Activated B cell treated with CpG ODN at 0.5 μM for 24 hours (primary cell): ENCODE measurements at regions of chr7 and their contacts with region 1.

Region 1: DNA sequence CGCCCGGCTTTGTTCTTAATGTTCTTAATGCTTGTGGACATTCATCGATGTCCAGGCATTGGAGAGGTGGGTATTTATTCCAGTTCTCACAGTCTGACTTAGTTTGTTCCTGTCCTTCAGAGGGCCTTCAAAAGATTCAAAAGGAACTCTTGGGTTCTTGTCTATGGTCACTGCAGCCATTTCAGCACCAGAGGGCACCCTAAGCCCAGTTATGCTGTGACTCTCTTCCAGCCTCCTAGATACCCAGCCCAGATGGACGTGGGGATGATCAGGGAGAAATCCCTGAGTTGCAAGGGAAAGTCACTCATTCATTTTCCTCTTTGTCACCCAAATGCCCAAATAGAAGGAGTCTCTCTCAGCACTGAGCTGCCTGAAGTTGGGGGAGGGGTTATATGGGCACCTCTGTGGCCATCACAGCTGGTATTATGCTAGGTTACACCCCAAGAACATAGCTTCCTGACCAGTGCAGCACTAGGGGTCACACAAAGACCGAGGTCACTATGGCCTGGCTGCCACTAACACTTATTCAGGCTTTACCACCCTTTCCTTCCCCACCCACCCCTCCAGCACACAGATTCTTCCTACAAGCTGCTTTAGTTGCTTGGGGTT is 26.5 kb upstream of the CCDC126 start:
- DNase-seq: peak; percentile 53
- ATAC-seq: peak; percentile 89
- H3K4me3 Mint-ChIP-seq: no peak overlapping the region
- H3K27ac Mint-ChIP-seq: no peak overlapping the region
- H3K4me1 Mint-ChIP-seq: no peaks in the 10 kb centered on the region
- H3K27me3 Mint-ChIP-seq: peaks cover 14% of the 10 kb centered on the region
- CTCF ChIP-seq: peak; percentile 29

Region 2: DNA sequence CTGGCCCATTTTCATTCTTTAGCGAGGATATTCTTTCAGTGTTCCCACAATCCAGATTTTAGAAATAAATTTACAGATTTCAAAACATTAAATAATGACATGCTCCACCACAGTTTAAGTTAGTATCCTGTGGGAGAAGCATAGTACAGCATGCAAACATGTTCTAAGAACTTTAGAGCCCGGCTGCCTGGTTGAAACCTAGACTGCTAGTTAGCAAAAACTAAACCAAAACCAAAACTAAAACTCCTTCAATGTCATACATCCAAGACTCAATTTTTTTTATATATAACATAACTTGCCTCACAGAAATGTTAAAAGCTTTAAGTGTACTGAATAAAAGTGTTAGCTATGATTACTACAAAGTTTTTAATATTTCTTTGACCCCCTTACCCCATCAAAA is 55.9 kb before region 1 on chr7:
- CTCF ChIA-PET with region 1: no interaction called
- POLR2A ChIA-PET with region 1: no interaction called
- intact Hi-C with region 1: no loop called
- DNase-seq: no peak
- ATAC-seq: no peak
- H3K4me3 Mint-ChIP-seq: no peak overlapping the region
- H3K27ac Mint-ChIP-seq: no peak overlapping the region
- H3K4me1 Mint-ChIP-seq: no peaks in the 10 kb centered on the region
- H3K27me3 Mint-ChIP-seq: no peaks in the 10 kb centered on the region
- CTCF ChIP-seq: no peak

Region 3: DNA sequence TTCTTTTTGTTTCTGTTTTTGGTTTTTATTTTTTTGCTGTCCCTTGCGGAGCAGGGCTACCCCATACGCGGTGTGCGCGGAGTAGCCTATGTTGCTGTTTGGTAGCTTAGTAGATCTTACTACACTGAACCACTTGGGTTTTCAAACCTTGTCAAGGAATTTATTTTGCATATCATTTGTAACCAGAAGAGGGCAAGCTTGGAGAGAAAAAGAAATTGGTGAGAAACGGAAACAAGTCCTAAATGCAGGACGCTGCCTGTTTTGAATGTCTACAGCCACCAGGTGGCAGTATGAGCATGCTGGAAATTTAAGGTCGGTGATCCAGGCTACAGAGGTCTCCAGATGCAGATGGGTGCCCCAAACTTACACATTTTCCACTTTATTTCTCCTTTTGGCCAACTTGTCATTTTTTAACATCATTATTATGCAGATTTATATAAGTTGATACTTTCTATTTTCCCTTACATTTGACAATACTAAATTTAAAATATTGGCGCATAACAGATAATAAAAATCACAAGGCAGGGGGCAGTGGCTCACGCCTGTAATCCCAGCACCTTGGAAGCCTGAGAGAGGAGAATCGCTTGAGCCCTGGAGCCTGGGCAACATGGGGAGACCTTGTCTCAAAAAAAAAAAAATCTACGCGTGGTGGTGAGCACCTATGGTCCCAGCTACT is 23.7 kb before region 1 on chr7:
- CTCF ChIA-PET with region 1: interaction called, 3 read pairs
- POLR2A ChIA-PET with region 1: no interaction called
- intact Hi-C with region 1: loop called (anchors 1 kb)
- DNase-seq: peak; percentile 40
- ATAC-seq: peak; percentile 91
- H3K4me3 Mint-ChIP-seq: no peak overlapping the region
- H3K27ac Mint-ChIP-seq: no peak overlapping the region
- H3K4me1 Mint-ChIP-seq: peaks cover 18% of the 10 kb centered on the region
- H3K27me3 Mint-ChIP-seq: no peaks in the 10 kb centered on the region
- CTCF ChIP-seq: no peak

Region 4: GRCh38 chr7:23712368-23713284 is 141.9 kb after region 1 on chr7:
- CTCF ChIA-PET with region 1: interaction called, 42 read pairs
- POLR2A ChIA-PET with region 1: no interaction called
- intact Hi-C with region 1: loop called (anchors 1 kb)
- DNase-seq: no peak
- ATAC-seq: no peak
- H3K4me3 Mint-ChIP-seq: no peak overlapping the region
- H3K27ac Mint-ChIP-seq: no peak overlapping the region
- H3K4me1 Mint-ChIP-seq: no peaks in the 10 kb centered on the region
- H3K27me3 Mint-ChIP-seq: no peaks in the 10 kb centered on the region
- CTCF ChIP-seq: no peak

Region 5: GRCh38 chr7:24401628-24402593 is 831.2 kb after region 1 on chr7:
- CTCF ChIA-PET with region 1: no interaction called
- POLR2A ChIA-PET with region 1: no interaction called
- intact Hi-C with region 1: loop called (anchors 10 kb)
- DNase-seq: no peak
- ATAC-seq: no peak
- H3K4me3 Mint-ChIP-seq: no peak overlapping the region
- H3K27ac Mint-ChIP-seq: no peak overlapping the region
- H3K4me1 Mint-ChIP-seq: peaks cover 6% of the 10 kb centered on the region
- H3K27me3 Mint-ChIP-seq: peaks cover 6% of the 10 kb centered on the region
- CTCF ChIP-seq: no peak

Region 6: DNA sequence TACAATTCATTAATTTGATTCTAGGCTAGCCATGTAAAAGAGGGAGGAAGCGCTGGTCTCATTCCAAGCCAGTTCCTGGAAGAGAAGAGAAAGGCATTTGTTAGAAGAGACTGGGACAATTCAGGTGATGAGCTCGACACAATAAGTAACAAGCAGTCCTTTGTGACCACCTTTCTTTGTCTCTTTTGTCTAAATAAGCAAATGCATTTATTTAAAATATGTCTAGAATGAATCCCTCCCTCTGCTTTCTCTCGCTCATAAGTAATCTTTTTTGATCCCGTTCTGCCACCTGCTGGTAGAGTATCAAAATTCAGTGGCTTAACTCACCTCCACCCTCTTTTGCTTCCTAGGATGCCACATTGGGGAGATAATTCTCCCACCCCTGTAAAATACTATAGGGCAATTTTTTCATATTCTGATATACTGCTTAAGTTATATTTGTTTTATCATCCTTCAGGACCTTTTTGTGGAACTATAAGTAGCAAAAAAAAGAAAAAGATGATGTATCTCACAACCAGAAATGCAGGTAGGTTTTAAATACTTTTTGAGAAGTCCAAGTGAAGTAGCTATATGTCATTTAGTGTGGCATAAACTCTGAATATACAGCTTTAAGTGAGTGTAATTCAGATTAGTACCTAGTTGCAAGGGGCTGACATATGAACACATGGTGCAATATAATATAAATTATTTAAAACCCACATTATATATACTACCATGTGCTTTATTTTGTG is 1095.0 kb after region 1 on chr7:
- CTCF ChIA-PET with region 1: interaction called, 19 read pairs
- POLR2A ChIA-PET with region 1: no interaction called
- intact Hi-C with region 1: loop called (anchors 1 kb)
- DNase-seq: no peak
- ATAC-seq: no peak
- H3K4me3 Mint-ChIP-seq: no peak overlapping the region
- H3K27ac Mint-ChIP-seq: no peak overlapping the region
- H3K4me1 Mint-ChIP-seq: no peaks in the 10 kb centered on the region
- H3K27me3 Mint-ChIP-seq: no peaks in the 10 kb centered on the region
- CTCF ChIP-seq: peak; percentile 89